ENCODE measurements at regions of chr15 and their contacts with region 1.

Region 1: DNA sequence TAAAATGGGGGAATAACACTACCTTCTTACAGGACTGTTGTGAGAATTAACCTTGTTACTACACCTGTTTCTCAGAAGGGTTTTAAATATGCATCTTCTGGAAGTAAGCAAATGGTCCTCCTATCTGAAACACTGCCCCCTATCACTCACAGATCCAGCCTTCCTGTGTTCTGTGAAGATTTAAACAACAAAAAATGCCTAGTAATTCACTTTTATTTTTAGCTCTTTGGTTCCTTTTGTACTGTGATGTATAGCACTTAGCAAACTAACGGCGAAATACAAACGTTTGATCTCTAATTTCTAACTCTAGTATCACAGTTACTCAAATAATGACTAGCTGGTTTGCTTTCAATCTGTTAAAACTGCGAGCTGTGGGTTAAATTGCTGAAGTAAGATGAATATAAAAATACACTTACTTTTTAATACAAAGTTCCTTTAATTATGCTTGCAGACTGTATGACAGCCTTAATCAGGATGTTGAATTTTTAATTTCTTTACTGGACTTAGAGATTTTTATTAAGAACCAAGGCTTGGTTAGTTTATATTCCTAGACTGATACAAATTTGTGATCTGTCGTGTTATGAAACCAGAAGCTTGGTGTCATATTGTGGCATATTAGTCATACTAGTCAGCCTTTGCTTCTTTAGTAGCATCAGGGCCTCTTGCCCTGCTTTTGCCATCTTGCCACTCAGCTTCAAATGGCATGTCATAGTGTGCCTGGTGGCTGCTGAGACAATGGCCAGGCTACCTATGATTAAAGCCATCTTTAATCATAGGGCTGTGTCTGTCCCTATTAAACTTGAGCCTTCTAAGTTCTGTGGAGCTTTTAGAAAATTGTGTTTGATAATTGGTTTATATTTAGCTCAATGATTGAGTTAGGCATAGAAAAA is 9.2 kb downstream of the EIF3J start:
- DNase-seq: peak in 3 of 35 experiments; percentile 9 to 48 (median 12)
- ATAC-seq: peak; percentile 65 to 70 (median 66)
- H3K4me3 ChIP-seq: no peak overlapping the region
- H3K4me3 Mint-ChIP-seq: peak overlapping the region; percentile 11 to 46 (median 14)
- H3K27ac ChIP-seq: peak overlapping the region; percentile 48
- H3K27ac Mint-ChIP-seq: peak overlapping the region; percentile 53 to 66
- H3K4me1 ChIP-seq: peaks cover 6 to 28% of the 10 kb centered on the region in 2 experiments
- H3K4me1 Mint-ChIP-seq: peaks cover 63 to 72% (median 68%) of the 10 kb centered on the region in 3 donors
- H3K27me3 ChIP-seq: no peaks in the 10 kb centered on the region
- H3K27me3 Mint-ChIP-seq: no peaks in the 10 kb centered on the region

Region 2: DNA sequence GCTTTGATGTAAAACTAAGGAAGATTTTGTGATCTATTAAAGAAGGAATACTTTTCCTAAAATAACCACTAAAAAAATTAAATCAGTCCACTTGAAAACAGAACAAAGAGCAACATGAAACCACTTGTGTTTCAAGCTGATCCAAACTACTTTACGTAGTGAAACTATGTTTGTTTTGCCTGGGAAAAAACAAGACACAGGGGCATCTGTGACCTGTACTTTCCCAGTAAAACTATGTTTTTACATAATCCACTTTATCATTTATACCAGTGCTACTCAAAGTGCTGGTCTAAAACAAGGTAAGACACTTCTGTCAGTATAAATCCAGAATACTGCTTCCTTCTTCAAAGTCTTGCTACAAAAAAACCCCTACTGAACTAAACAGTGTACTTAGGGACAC is 60.6 kb after region 1 on chr15:
- CTCF ChIA-PET with region 1: no interaction called
- POLR2A ChIA-PET with region 1: interaction called, 3 to 17 read pairs
- DNase-seq: no peak
- ATAC-seq: no peak
- H3K4me3 ChIP-seq: no peak overlapping the region
- H3K4me3 Mint-ChIP-seq: no peak overlapping the region
- H3K27ac ChIP-seq: no peak overlapping the region
- H3K27ac Mint-ChIP-seq: peak overlapping the region in 1 of 2 donors; percentile 7
- H3K4me1 ChIP-seq: no peaks in the 10 kb centered on the region
- H3K4me1 Mint-ChIP-seq: no peaks in the 10 kb centered on the region
- H3K27me3 ChIP-seq: no peaks in the 10 kb centered on the region
- H3K27me3 Mint-ChIP-seq: no peaks in the 10 kb centered on the region

Measured in T-cell (primary cell).